ENCODE measurements at regions of chr3 and their contacts with region 1.

Region 1: DNA sequence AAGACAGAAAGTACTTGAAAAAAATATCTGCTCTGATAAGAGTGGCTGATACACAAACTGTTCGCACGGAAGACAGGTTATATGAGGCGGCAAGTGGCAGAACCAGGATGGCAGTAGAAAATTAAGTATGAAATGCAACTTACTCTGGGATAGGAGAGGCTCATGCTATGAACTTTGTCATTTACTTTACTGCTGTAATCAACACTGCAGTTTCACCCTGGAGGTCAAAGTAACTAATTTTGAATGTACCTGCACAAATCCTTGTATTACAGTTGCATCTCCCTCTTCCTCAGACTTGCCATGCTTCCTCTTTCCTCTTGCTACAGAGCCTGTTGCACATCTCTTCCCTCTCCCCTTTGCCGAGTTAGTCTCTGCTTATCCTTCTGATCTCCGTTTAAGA is 38.8 kb downstream of the HACL1 start:
- DNase-seq: no peak
- H3K4me3 ChIP-seq: no peak overlapping the region
- H3K27ac ChIP-seq: no peak overlapping the region
- H3K4me1 ChIP-seq: no peaks in the 10 kb centered on the region
- H3K27me3 ChIP-seq: no peaks in the 10 kb centered on the region
- CTCF ChIP-seq: no peak

Region 2: GRCh38 chr3:15241341-15241740 is 321.2 kb before region 1 on chr3:
- intact Hi-C with region 1: loop called (anchors 10 kb)
- DNase-seq: peak in 1 of 2 donors; percentile 42
- H3K4me3 ChIP-seq: no peak overlapping the region
- H3K27ac ChIP-seq: no peak overlapping the region
- H3K4me1 ChIP-seq: no peaks in the 10 kb centered on the region
- H3K27me3 ChIP-seq: no peaks in the 10 kb centered on the region
- CTCF ChIP-seq: no peak

Region 3: GRCh38 chr3:15361494-15362212 is 200.9 kb before region 1 on chr3:
- intact Hi-C with region 1: no loop called
- DNase-seq: peak in 1 of 2 donors; percentile 25
- H3K4me3 ChIP-seq: no peak overlapping the region
- H3K27ac ChIP-seq: peak overlapping the region in 1 of 2 donors; percentile 48
- H3K4me1 ChIP-seq: peaks cover 0 to 55% (median 24%) of the 10 kb centered on the region in 4 donors
- H3K27me3 ChIP-seq: no peaks in the 10 kb centered on the region
- CTCF ChIP-seq: no peak

Region 4: GRCh38 chr3:15427182-15427880 is 135.2 kb before region 1 on chr3 and contains the starts of genes EAF1 and METTL6:
- intact Hi-C with region 1: no loop called
- DNase-seq: peak; percentile 82 to 87
- H3K4me3 ChIP-seq: peak within 1 kb of the TSS; percentile 79 to 87
- H3K27ac ChIP-seq: peak within 1 kb of the TSS; percentile 88 to 90
- H3K4me1 ChIP-seq: peaks cover 0 to 40% (median 20%) of the 10 kb centered on the region in 4 donors
- H3K27me3 ChIP-seq: no peaks in the 10 kb centered on the region
- CTCF ChIP-seq: peak; percentile 25 to 31

Region 5: GRCh38 chr3:15439476-15439875 is 123.1 kb before region 1 on chr3:
- intact Hi-C with region 1: loop called (anchors 5 kb)
- DNase-seq: no peak
- H3K4me3 ChIP-seq: no peak overlapping the region
- H3K27ac ChIP-seq: peak overlapping the region; percentile 6 to 38
- H3K4me1 ChIP-seq: peaks cover 0 to 12% (median 4%) of the 10 kb centered on the region in 4 donors
- H3K27me3 ChIP-seq: no peaks in the 10 kb centered on the region
- CTCF ChIP-seq: no peak